WTC11 (cell line): ENCODE measurements at regions of chr15 and their contacts with region 1.

Region 1: GRCh38 chr15:78859971-78860732 is 12.5 kb upstream of the MORF4L1 start:
- DNase-seq: peak; percentile 80
- ATAC-seq: peak; percentile 98
- H3K4me3 Mint-ChIP-seq: peak overlapping the region; percentile 87
- H3K27ac Mint-ChIP-seq: peak overlapping the region; percentile 98
- H3K4me1 Mint-ChIP-seq: peaks cover 3% of the 10 kb centered on the region; the same call in 1 of the 2 replicates
- H3K27me3 Mint-ChIP-seq: no peaks in the 10 kb centered on the region
- CTCF ChIP-seq: peak; percentile 16; the same call in 1 of the 2 replicates

Region 2: DNA sequence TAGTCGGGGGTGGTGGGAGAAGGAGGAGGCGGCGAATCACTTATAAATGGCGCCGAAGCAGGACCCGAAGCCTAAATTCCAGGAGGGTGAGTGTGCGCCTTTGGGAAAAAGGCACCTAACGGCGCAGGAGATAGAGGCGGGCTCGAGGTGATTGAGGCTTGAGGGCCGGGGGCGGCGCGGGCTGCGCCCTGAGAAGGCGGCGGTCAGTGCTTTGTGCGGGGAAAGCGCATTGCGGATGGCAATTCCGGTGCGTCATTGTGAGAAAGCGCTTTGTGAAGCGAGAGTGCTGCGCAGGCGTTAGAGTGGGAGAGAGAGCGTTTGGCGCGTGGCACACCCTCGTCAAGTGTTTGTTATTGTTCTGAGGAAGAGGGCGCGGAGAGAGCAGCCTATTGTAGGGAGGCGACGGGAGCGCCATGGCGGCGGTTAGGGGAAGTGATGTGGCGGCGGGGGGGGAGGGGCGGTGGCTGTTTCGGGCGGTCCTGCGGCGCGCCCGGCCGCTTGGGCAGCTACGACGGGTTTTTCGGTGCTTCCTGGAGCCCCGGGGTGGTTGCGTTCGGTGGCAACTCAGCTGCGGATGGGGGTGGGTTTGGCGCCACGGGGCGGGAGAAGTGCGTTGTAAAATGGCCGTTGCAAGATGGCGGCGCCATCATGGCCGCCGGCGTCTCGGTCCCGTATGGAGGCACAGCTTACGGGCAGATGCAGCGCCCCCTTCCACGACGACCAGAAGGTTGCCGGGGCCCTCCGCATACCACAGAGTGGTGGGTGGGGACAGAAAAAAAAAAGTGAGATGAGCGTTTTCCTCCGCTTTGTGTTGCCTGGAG is 13.0 kb after region 1 on chr15:
- CTCF ChIA-PET with region 1: interaction called, 15 read pairs
- POLR2A ChIA-PET with region 1: interaction called, 11 read pairs
- DNase-seq: peak; percentile 91
- ATAC-seq: peak; percentile 71
- H3K4me3 Mint-ChIP-seq: peak overlapping the region; percentile 100
- H3K27ac Mint-ChIP-seq: peak overlapping the region; percentile 100
- H3K4me1 Mint-ChIP-seq: peaks cover 45% of the 10 kb centered on the region
- H3K27me3 Mint-ChIP-seq: no peaks in the 10 kb centered on the region
- CTCF ChIP-seq: no peak

Region 3: GRCh38 chr15:79115986-79116665 is 256.0 kb after region 1 on chr15:
- CTCF ChIA-PET with region 1: no interaction called
- POLR2A ChIA-PET with region 1: no interaction called
- DNase-seq: no peak
- ATAC-seq: no peak
- H3K4me3 Mint-ChIP-seq: no peak overlapping the region
- H3K27ac Mint-ChIP-seq: no peak overlapping the region
- H3K4me1 Mint-ChIP-seq: no peaks in the 10 kb centered on the region
- H3K27me3 Mint-ChIP-seq: peaks cover 4% of the 10 kb centered on the region
- CTCF ChIP-seq: no peak